ENCODE measurements at regions of chr21 and their contacts with region 1.

Region 1: DNA sequence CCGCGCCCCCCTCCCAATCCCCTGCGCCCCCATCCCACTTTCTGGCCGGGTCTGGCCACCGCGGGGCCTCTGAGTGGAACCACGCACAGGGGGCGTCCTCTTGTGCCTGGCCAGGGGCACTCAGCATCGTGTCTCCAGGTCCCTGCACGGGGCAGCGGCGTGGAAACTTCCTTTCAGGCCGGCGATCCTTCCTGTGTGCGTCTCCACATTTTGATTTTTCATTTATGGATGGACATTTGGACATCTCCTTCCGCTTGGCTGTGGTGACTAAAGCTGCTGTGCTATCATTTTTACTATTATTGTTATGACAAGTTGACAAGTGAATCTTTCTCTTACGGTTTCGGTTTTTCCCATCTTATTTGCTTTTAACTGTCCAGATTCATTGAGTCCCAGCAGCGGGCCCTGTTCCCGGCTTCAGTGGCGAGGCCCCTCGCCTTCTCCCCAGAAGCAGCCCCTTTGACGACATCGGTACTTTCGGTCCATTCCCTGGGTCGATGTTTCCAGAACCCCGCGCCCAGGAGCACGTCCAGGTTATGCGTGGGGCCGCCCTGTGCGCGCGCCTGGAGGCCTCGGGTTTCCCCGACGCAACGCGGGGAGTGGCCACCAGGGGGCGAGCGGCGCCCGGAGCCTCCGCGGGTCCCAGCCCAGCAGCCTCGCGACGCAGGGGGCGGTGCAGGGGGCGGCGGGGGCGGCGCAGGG is 12.4 kb upstream of the SLC19A1 start:
- DNase-seq: peak; percentile 81 to 95 (median 95)
- ATAC-seq: peak; percentile 84
- H3K4me3 ChIP-seq: peak overlapping the region; percentile 66
- H3K27ac ChIP-seq: peak overlapping the region; percentile 1
- H3K4me1 ChIP-seq: no peaks in the 10 kb centered on the region
- H3K27me3 ChIP-seq: no peaks in the 10 kb centered on the region

Region 2: DNA sequence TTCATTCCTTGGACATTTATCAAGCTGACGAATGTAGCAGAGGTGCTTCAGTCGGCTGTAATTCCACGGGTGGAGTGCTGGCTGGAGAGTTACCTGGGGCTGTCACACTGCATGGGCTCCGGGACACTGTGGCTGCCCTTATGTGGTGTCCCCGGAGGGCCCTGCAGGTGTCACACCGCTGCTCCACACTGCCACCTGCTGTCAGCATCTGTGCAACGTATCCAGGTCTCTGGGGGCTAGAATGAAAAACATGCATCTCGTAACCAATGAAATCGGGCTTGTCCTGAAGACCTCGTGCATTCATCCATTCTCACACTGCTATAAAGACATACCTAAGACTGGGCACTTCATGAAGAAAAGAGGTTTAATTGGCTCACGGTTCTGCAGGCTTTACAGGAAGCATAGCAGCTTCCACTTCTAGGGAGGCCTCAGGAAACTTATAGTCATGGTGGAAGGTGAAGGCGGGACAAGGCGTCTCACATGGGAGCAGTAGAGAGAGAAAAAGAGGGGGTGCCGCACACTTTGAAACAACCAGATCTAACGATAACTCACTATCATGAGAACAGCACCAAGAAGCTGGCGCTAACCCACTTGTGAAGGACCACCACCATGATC is 42.2 kb after region 1 on chr21:
- intact Hi-C with region 1: loop called in 2 of 4 experiments (anchors 2 to 5 kb)
- DNase-seq: peak; percentile 75 to 90 (median 86)
- ATAC-seq: peak; percentile 72 to 82
- H3K4me3 ChIP-seq: no peak overlapping the region
- H3K27ac ChIP-seq: no peak overlapping the region
- H3K4me1 ChIP-seq: no peaks in the 10 kb centered on the region
- H3K27me3 ChIP-seq: no peaks in the 10 kb centered on the region

Region 3: GRCh38 chr21:45820171-45821091 is 265.8 kb after region 1 on chr21:
- intact Hi-C with region 1: loop called (anchors 2 to 10 kb)
- DNase-seq: peak; percentile 80 to 91 (median 90)
- ATAC-seq: peak; percentile 81 to 83
- H3K4me3 ChIP-seq: no peak overlapping the region
- H3K27ac ChIP-seq: no peak overlapping the region
- H3K4me1 ChIP-seq: no peaks in the 10 kb centered on the region
- H3K27me3 ChIP-seq: no peaks in the 10 kb centered on the region

Region 4: DNA sequence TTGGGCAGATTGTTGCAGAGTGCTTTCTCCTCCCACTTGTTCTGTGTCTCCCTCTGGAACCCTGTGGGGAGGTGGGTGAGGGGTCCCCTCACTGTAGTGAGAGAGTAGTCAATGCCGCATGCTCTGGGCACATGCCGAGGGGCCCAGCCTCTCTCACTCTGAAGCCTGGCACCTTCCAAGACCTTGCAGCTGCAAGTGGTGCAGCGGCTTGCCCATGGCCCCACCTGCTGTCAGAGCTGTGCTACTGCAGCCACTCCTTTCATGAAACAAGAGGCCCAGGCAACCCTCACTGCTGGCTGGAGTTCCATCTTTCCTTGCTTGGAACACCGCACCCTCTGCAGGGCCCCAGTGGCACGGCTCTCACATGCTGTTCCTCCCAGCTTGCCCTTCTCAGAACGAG is 368.5 kb after region 1 on chr21:
- intact Hi-C with region 1: loop called in 1 of 4 experiments (anchors 10 kb)
- DNase-seq: peak; percentile 76 to 92 (median 89)
- ATAC-seq: peak; percentile 87
- H3K4me3 ChIP-seq: no peak overlapping the region
- H3K27ac ChIP-seq: no peak overlapping the region
- H3K4me1 ChIP-seq: no peaks in the 10 kb centered on the region
- H3K27me3 ChIP-seq: no peaks in the 10 kb centered on the region

Region 5: GRCh38 chr21:46065215-46065913 is 510.7 kb after region 1 on chr21:
- intact Hi-C with region 1: no loop called
- DNase-seq: peak; percentile 77 to 88 (median 85)
- ATAC-seq: peak; percentile 23 to 63
- H3K4me3 ChIP-seq: no peak overlapping the region
- H3K27ac ChIP-seq: peak overlapping the region; percentile 44
- H3K4me1 ChIP-seq: no peaks in the 10 kb centered on the region
- H3K27me3 ChIP-seq: no peaks in the 10 kb centered on the region

Measured in right cardiac atrium (tissue), 5 donors.